Stomach (tissue), 19 donors: ENCODE measurements at regions of chr6 and their contacts with region 1.

Region 1: DNA sequence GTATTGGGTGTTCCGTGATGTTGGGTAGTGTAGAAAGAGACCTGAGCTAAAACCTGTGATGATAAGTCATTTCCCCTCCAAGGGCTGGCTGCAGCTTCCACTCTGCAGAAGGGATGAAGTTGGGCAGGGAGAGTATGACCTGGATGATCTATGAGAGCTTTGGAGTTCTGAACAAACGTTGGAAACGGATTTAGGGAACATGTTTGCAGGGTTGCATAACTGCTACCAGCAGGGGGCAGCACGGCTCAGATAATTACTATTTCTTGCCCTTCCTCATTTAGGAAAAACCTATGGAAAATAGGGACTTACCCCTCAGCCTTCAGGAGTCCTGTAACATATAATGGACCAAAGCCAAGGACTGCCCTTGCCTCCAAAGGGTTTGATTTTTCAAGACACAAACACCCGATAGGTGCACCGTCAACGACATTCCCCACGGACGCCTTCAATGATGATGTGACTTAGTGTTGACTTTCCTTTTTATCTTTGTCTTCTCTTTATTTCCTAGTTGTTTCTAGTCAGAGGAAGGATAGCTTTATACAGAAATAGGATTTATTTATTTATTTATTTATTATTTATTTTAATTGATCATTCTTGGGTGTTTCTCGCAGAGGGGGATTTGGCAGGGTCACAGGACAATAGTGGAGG is 164.9 kb upstream of the SASH1 start:
- DNase-seq: peak; percentile 76 to 79
- H3K4me3 ChIP-seq: no peak overlapping the region
- H3K27ac ChIP-seq: no peak overlapping the region
- H3K4me1 ChIP-seq: no peaks in the 10 kb centered on the region
- H3K27me3 ChIP-seq: no peaks in the 10 kb centered on the region
- CTCF ChIP-seq: peak in 5 of 7 experiments; percentile 65 to 84 (median 75)
- EP300 ChIP-seq: no peak
- POLR2A ChIP-seq: no peak

Region 2: DNA sequence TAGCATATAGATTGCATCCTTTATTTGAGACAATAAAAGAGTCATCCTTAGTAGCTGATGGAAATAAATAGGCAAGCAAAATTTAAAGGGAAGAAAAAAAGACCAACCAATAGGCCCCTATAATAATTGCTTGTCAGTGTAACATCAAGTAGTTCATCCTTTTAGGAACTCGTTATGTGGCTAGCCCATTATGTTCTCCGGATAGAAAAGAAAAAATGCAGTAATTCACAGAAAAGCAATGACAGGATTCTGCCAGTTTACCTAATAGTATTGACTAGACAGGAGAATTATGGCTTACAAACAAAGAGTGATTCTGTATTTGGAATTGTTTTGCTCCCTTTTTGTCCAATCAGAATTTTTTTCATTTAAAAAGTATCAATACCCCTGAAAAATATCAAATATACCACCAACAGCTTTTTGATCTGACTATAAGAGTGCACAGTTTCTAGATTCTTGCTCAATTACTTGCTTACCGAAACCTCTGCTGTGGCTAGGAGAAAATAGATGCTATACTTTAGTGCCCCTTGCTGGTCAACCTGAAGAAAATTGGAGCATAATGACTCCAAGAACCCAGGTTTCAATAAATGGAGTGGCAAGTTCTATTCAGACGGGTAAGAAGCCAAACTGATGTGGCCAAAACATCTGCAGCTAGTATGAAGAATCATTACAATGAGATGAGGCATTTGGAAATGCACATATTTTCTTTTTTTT is 73.4 kb after region 1 on chr6:
- intact Hi-C with region 1: loop called (anchors 10 kb)
- DNase-seq: peak in 1 of 2 donors; percentile 78
- H3K4me3 ChIP-seq: no peak overlapping the region
- H3K27ac ChIP-seq: no peak overlapping the region
- H3K4me1 ChIP-seq: no peaks in the 10 kb centered on the region
- H3K27me3 ChIP-seq: no peaks in the 10 kb centered on the region
- CTCF ChIP-seq: peak in 5 of 7 experiments; percentile 13 to 52 (median 20)
- EP300 ChIP-seq: no peak
- POLR2A ChIP-seq: no peak

Region 3: GRCh38 chr6:148464319-148465010 is 286.8 kb after region 1 on chr6:
- intact Hi-C with region 1: loop called (anchors 5 kb)
- DNase-seq: peak; percentile 60 to 88
- H3K4me3 ChIP-seq: no peak overlapping the region
- H3K27ac ChIP-seq: no peak overlapping the region
- H3K4me1 ChIP-seq: peaks cover 0 to 22% (median 11%) of the 10 kb centered on the region in 4 donors
- H3K27me3 ChIP-seq: no peaks in the 10 kb centered on the region
- CTCF ChIP-seq: peak in 5 of 7 experiments; percentile 63 to 94 (median 91)
- EP300 ChIP-seq: no peak
- POLR2A ChIP-seq: no peak